ENCODE measurements at regions of chr10 and their contacts with region 1.

Region 1: GRCh38 chr10:71713135-71714030 is 6.2 kb downstream of the C10orf105 start:
- DNase-seq: no peak
- H3K4me3 ChIP-seq: no peak overlapping the region
- H3K27ac ChIP-seq: no peak overlapping the region
- H3K4me1 ChIP-seq: peaks cover 0 to 6% (median 0%) of the 10 kb centered on the region in 4 experiments; a peak in 1 of 7 replicates
- H3K27me3 ChIP-seq: peaks cover 0 to 3% (median 0%) of the 10 kb centered on the region in 4 experiments; a peak in 1 of 7 replicates
- CTCF ChIP-seq: peak in 2 of 3 experiments; percentile 10 to 15; a peak in 2 of 4 replicates
- EP300 ChIP-seq: no peak
- POLR2A ChIP-seq: no peak
- RAD21 ChIP-seq: no peak; a peak in 1 of 4 replicates

Region 2: GRCh38 chr10:71748671-71749191 is 35.3 kb after region 1 on chr10:
- CTCF ChIA-PET with region 1: interaction called, 15 read pairs
- POLR2A ChIA-PET with region 1: no interaction called
- DNase-seq: no peak
- H3K4me3 ChIP-seq: no peak overlapping the region
- H3K27ac ChIP-seq: no peak overlapping the region
- H3K4me1 ChIP-seq: peaks cover 1 to 8% (median 4%) of the 10 kb centered on the region in 4 experiments; a peak in 5 of 7 replicates
- H3K27me3 ChIP-seq: 0 out of 7 replicates have a peak, but pooled peaks cover 0 to 2% (median 0%) of the 10 kb centered on the region in 4 experiments
- CTCF ChIP-seq: peak in 2 of 3 experiments; percentile 12; a peak in 1 of 4 replicates
- EP300 ChIP-seq: no peak
- POLR2A ChIP-seq: no peak
- RAD21 ChIP-seq: no peak

Region 3: DNA sequence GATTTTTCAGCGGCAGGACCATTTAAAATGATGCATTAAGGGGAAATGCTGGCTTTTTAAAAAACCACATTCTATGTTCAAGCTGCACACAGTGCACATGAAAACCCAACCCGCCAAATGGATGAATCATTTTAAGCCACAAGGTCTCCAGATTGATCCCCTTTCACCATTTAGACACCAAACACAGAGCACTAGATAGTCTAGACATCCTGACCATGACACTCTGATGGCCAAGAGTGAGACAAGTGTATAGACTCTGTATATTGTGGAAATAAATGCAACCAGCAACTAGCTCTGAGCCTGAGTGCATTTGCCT is 109.0 kb after region 1 on chr10:
- CTCF ChIA-PET with region 1: no interaction called
- POLR2A ChIA-PET with region 1: no interaction called
- DNase-seq: no peak
- H3K4me3 ChIP-seq: no peak overlapping the region
- H3K27ac ChIP-seq: no peak overlapping the region
- H3K4me1 ChIP-seq: peaks cover 0 to 2% (median 0%) of the 10 kb centered on the region in 4 experiments; a peak in 1 of 7 replicates
- H3K27me3 ChIP-seq: no peaks in the 10 kb centered on the region
- CTCF ChIP-seq: no peak
- EP300 ChIP-seq: no peak
- POLR2A ChIP-seq: no peak
- RAD21 ChIP-seq: no peak

Region 4: DNA sequence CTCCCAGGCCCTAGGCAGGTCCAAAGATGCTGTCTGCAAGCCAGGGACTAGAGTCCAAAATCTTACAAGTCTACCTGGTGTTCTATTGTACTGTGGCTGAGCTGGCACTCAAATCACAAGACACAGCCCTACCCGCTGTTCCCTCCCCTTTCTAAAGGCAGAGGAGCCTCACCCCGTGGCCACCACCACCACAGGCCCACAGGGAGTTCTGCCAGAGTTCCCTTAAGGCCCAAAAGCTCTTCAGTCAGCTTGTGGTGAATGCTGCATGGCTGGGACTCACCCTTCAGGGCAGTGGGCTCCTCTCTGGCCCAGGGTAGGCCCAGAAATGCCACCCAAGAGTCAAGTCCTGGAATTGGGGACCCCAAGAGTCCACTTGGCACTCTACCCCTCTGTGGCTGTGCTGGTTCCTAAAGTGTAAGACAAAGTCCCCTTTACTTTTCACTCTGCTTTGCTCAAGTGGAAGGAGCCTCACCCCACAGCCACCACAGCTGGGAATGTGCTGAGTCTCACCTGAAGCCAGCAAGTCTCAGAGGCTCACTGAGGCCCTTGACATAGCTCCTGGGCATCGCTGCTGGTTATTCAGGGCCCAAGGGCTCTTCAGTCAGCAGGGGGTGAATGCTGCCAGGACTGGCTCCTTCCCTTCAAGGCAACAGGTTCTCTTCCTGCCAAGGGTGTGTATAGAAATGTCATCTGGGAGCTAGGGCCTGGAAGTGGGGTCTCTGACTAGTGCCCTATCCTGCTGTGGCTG is 186.5 kb after region 1 on chr10:
- CTCF ChIA-PET with region 1: no interaction called
- POLR2A ChIA-PET with region 1: no interaction called
- DNase-seq: no peak
- H3K4me3 ChIP-seq: no peak overlapping the region
- H3K27ac ChIP-seq: no peak overlapping the region
- H3K4me1 ChIP-seq: no peaks in the 10 kb centered on the region
- H3K27me3 ChIP-seq: no peaks in the 10 kb centered on the region
- CTCF ChIP-seq: no peak
- EP300 ChIP-seq: no peak
- POLR2A ChIP-seq: no peak
- RAD21 ChIP-seq: no peak

Region 5: DNA sequence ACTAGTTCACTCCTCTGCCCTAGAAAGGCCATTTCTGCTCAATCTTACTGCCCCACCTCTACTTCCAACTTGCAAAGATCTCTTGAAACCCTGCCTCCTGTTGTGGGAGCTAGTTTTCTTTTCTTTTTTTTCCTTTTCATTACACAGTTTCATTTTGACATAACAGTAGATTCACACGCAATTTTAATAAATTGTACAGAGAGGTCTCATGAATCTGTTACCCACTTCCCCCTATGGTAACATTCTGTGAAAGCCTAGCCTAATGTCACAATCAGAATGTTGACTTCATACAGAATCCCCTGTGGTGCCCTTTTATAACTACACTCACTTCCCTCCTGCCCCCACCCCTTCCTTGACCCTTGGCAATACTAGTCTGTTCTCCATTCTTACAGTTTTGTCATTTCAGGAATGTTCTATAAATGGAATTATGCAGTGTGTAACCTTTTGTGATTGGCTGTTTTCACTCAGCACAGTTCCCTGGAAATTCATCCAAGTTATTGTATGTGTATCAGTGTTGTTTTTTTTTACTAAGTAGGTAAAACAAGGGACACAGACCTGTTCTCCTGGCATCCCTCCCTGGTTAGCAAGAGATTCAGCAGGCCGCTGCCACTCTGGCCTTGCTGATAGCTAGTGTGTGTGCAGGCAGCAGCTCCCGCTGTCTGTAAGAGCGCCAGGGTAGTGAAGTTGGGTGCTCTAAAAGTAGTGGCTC is 272.3 kb after region 1 on chr10:
- CTCF ChIA-PET with region 1: no interaction called
- POLR2A ChIA-PET with region 1: no interaction called
- DNase-seq: no peak
- H3K4me3 ChIP-seq: no peak overlapping the region
- H3K27ac ChIP-seq: no peak overlapping the region
- H3K4me1 ChIP-seq: peaks cover 0 to 3% (median 1%) of the 10 kb centered on the region in 4 experiments; a peak in 1 of 7 replicates
- H3K27me3 ChIP-seq: no peaks in the 10 kb centered on the region
- CTCF ChIP-seq: no peak
- EP300 ChIP-seq: no peak
- POLR2A ChIP-seq: no peak
- RAD21 ChIP-seq: no peak

Measured in H1 (cell line).